ENCODE measurements at regions of chr2 and their contacts with region 1.

Region 1: GRCh38 chr2:74507145-74507925 is at the start of gene PCGF1:
- DNase-seq: peak; percentile 98
- ATAC-seq: peak; percentile 78
- H3K4me3 ChIP-seq: peak within 1 kb of the TSS; percentile 79 to 97 (median 95)
- H3K27ac ChIP-seq: peak within 1 kb of the TSS; percentile 95
- H3K4me1 ChIP-seq: peaks cover 72% of the 10 kb centered on the region
- H3K27me3 ChIP-seq: no peaks in the 10 kb centered on the region; a peak in 1 of 5 replicates
- CTCF ChIP-seq: peak; percentile 98
- EP300 ChIP-seq: peak in 1 of 2 experiments; percentile 47; a peak in 1 of 4 replicates
- POLR2A ChIP-seq: peak in 1 of 2 experiments; percentile 73; a peak in 2 of 4 replicates
- RAD21 ChIP-seq: peak; percentile 89
- total RNA-seq, gene PCGF1: 14.2 and 20.4 TPM in 2 replicates

Region 2: DNA sequence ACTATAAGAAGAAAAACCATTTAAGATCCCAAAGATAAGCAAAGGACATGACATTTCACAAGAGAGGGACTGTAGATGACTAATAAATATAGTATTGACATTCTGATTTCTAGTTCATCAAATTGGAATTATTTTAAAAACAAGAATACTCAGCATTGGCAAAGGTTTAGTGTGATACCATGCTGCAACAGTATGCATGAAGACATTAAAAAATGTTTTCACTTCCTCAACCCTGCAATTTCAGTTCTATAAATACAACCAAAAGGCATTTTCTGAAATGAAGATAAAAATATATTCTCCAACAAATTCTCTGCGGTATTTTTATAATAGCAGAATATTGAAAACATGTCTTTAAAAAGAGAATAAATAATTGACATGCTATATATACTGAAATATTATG is 88.0 kb before region 1 on chr2:
- CTCF ChIA-PET with region 1: no interaction called
- POLR2A ChIA-PET with region 1: no interaction called
- in situ Hi-C with region 1: no loop called
- intact Hi-C with region 1: no loop called
- DNase-seq: no peak
- ATAC-seq: no peak
- H3K4me3 ChIP-seq: no peak overlapping the region
- H3K27ac ChIP-seq: no peak overlapping the region
- H3K4me1 ChIP-seq: peaks cover 38% of the 10 kb centered on the region
- H3K27me3 ChIP-seq: peaks cover 0 to 10% of the 10 kb centered on the region in 2 experiments; a peak in 3 of 5 replicates
- CTCF ChIP-seq: no peak
- EP300 ChIP-seq: no peak
- POLR2A ChIP-seq: no peak
- RAD21 ChIP-seq: no peak

Region 3: DNA sequence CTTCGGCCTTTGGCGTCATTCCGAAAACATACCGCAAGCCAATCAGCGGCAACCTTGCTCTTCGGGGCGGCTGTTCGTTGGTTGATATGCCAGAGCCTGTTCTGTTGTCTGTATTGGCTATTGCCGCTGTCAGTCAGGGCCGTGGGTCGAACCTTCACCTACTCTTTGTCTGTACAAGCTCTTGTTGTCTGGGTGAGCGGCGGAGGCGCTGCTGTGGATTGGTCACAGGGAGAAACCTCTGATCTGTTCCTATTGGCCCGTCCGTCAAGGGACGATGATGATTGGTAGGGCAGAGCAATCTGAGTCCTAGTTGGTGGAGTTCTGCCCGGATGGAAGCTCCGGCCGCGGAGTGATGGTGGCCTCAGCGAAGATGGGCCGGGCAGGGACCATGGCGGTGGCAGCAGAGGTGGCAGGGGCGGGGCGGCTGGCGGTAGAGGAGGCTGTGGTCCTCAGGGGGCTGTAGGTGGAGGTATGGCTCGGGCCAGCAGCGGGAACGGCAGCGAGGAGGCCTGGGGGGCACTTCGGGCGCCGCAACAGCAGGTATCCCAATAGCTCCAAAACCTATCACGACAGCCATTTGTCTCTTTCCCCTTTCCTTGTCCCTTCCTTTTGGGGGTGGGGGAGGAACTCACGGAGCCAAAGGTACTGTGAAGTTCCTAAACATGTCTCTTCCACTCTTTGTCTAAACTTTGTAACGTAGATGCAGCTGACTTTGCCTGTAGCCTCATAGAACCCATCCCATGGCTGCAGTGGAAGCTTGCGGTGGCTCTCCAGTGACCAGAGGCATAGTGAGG is 49.0 kb before region 1 on chr2 and contains the start of gene WBP1:
- CTCF ChIA-PET with region 1: no interaction called
- POLR2A ChIA-PET with region 1: interaction called, 71 read pairs
- in situ Hi-C with region 1: no loop called
- intact Hi-C with region 1: no loop called
- DNase-seq: peak; percentile 100
- ATAC-seq: peak; percentile 92
- H3K4me3 ChIP-seq: peak within 1 kb of the TSS; percentile 76 to 92 (median 88)
- H3K27ac ChIP-seq: peak within 1 kb of the TSS; percentile 89
- H3K4me1 ChIP-seq: peaks cover 41% of the 10 kb centered on the region
- H3K27me3 ChIP-seq: no peaks in the 10 kb centered on the region; a peak in 1 of 5 replicates
- CTCF ChIP-seq: no peak
- EP300 ChIP-seq: no peak; a peak in 1 of 4 replicates
- POLR2A ChIP-seq: peak in 1 of 2 experiments; percentile 62; a peak in 2 of 4 replicates
- RAD21 ChIP-seq: 0 out of 2 replicates have a peak, but pooled peaks have one; percentile 26
- total RNA-seq, gene WBP1: 26.5 and 38.8 TPM in 2 replicates

Region 4: GRCh38 chr2:74472086-74472944 is 35.0 kb before region 1 on chr2 and contains the start of gene MRPL53:
- CTCF ChIA-PET with region 1: no interaction called
- POLR2A ChIA-PET with region 1: interaction called, 795 read pairs
- in situ Hi-C with region 1: no loop called
- intact Hi-C with region 1: no loop called
- DNase-seq: peak; percentile 92
- ATAC-seq: peak; percentile 87
- H3K4me3 ChIP-seq: peak within 1 kb of the TSS; percentile 67 to 91 (median 83)
- H3K27ac ChIP-seq: peak within 1 kb of the TSS; percentile 83
- H3K4me1 ChIP-seq: peaks cover 52% of the 10 kb centered on the region
- H3K27me3 ChIP-seq: no peaks in the 10 kb centered on the region; a peak in 1 of 5 replicates
- CTCF ChIP-seq: peak; percentile 42; the same call in 1 of the 2 replicates
- EP300 ChIP-seq: peak in 1 of 2 experiments; percentile 54; a peak in 2 of 4 replicates
- POLR2A ChIP-seq: peak; percentile 94 to 97
- RAD21 ChIP-seq: peak; percentile 45; the same call in 1 of the 2 replicates
- total RNA-seq, gene MRPL53: 51.9 and 53.8 TPM in 2 replicates

Region 5: DNA sequence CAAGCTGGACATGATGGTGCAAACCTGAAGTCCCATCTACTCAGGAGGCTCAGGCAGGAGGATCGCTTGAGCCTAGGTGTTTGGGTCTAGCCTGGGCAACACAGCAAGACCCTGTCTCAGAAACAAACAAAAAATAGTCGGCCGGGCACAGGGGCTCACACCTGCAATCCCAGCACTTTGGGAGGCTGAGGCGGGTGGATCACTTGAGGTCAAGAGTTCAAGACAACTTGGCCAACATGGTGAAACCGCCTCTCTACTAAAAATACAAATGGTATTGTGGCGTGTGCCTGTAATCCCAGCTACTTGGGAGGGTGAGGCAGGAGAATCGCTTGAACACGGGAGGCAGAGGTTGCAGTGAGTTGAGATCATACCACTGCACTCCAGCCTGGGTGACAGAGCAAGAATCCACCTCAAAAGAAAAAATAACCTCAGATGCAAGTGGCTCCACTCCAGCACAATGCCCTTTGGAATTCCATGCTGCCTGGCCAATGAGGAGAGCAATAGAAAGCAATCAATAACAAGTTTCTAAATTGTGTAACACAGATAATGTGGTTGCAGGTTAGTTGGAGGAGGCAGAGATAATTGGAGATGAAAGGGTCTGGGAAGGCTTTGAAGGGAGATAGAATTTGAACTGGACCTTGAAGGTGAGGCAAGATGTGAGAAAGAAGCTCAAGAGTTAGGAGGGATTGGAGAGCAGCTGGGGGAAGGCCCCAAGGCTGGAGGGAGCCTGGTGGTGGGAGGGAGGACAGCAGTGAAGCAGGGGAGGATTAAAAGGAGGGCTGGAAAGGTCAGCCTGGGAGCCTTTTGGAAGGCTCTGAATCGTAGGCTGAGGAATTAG is 18.5 kb before region 1 on chr2:
- CTCF ChIA-PET with region 1: interaction called, 20 read pairs
- POLR2A ChIA-PET with region 1: interaction called, 795 read pairs
- in situ Hi-C with region 1: no loop called
- intact Hi-C with region 1: no loop called
- DNase-seq: peak; percentile 93
- ATAC-seq: peak; percentile 83
- H3K4me3 ChIP-seq: peak overlapping the region in 1 of 3 experiments; percentile 18; a peak in 2 of 6 replicates
- H3K27ac ChIP-seq: peak overlapping the region; percentile 84
- H3K4me1 ChIP-seq: peaks cover 77% of the 10 kb centered on the region
- H3K27me3 ChIP-seq: no peaks in the 10 kb centered on the region
- CTCF ChIP-seq: 0 out of 2 replicates have a peak, but pooled peaks have one; percentile 3
- EP300 ChIP-seq: peak; percentile 92 to 98
- POLR2A ChIP-seq: peak; percentile 28 to 65; a peak in 1 of 4 replicates
- RAD21 ChIP-seq: no peak

Region 6: GRCh38 chr2:74544634-74545033 is 37.3 kb after region 1 on chr2:
- CTCF ChIA-PET with region 1: no interaction called
- POLR2A ChIA-PET with region 1: no interaction called
- in situ Hi-C with region 1: no loop called
- intact Hi-C with region 1: no loop called
- DNase-seq: no peak
- ATAC-seq: peak; percentile 18; the same call in 1 of the 3 replicates
- H3K4me3 ChIP-seq: no peak overlapping the region
- H3K27ac ChIP-seq: no peak overlapping the region
- H3K4me1 ChIP-seq: peaks cover 17% of the 10 kb centered on the region
- H3K27me3 ChIP-seq: peaks cover 0 to 23% of the 10 kb centered on the region in 2 experiments; a peak in 2 of 5 replicates
- CTCF ChIP-seq: peak; percentile 57
- EP300 ChIP-seq: no peak
- POLR2A ChIP-seq: no peak
- RAD21 ChIP-seq: no peak

Region 7: DNA sequence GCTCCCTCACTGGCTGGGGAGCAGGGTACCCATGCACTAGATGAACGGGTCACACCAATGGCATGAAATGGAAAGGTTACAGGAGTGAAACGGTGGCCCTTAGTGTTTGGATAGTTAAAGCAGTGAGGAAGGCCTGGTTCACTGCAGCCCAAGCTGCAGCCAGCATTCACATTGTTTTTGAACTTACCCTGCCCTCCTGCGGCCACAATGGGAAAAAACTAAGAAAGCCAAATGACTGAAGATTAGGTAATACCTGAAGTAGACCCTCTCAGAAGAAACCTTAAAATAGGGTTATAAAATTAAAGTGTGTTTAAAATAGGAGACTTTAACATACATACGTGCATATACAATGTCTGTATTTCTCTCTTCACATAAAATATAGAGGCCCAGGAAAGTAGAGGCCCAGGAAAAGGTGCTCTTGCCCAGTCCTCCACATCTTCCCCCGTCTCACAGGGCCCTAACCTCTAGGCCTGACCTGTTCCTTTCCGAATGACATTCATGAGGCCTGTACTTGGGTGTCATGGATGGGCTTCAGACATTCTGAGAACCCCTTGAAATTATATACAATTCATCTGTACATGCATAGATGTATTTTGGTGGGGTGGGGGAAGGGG is 80.4 kb after region 1 on chr2:
- CTCF ChIA-PET with region 1: interaction called, 6 read pairs
- POLR2A ChIA-PET with region 1: interaction called, 3 read pairs
- in situ Hi-C with region 1: no loop called
- intact Hi-C with region 1: loop called (anchors 2 kb)
- DNase-seq: peak; percentile 77
- ATAC-seq: peak; percentile 96
- H3K4me3 ChIP-seq: no peak overlapping the region
- H3K27ac ChIP-seq: no peak overlapping the region
- H3K4me1 ChIP-seq: peaks cover 20% of the 10 kb centered on the region
- H3K27me3 ChIP-seq: peaks cover 0 to 4% of the 10 kb centered on the region in 2 experiments; a peak in 3 of 5 replicates
- CTCF ChIP-seq: peak; percentile 94
- EP300 ChIP-seq: no peak
- POLR2A ChIP-seq: no peak
- RAD21 ChIP-seq: peak; percentile 88

Region 8: GRCh38 chr2:74816540-74817303 is 309.4 kb after region 1 on chr2:
- CTCF ChIA-PET with region 1: no interaction called
- POLR2A ChIA-PET with region 1: no interaction called
- in situ Hi-C with region 1: no loop called
- intact Hi-C with region 1: no loop called
- DNase-seq: peak; percentile 92
- ATAC-seq: peak; percentile 96
- H3K4me3 ChIP-seq: peak overlapping the region; percentile 25 to 61 (median 43)
- H3K27ac ChIP-seq: peak overlapping the region; percentile 63
- H3K4me1 ChIP-seq: peaks cover 84% of the 10 kb centered on the region
- H3K27me3 ChIP-seq: 0 out of 5 replicates have a peak, but pooled peaks cover 0 to 4% of the 10 kb centered on the region in 2 experiments
- CTCF ChIP-seq: no peak
- EP300 ChIP-seq: peak in 1 of 2 experiments; percentile 76; a peak in 2 of 4 replicates
- POLR2A ChIP-seq: no peak; a peak in 1 of 4 replicates
- RAD21 ChIP-seq: 0 out of 2 replicates have a peak, but pooled peaks have one; percentile 27

Measured in HepG2 (cell line).